A673 (cell line): ENCODE measurements at regions of chr13 and their contacts with region 1.

Region 1: DNA sequence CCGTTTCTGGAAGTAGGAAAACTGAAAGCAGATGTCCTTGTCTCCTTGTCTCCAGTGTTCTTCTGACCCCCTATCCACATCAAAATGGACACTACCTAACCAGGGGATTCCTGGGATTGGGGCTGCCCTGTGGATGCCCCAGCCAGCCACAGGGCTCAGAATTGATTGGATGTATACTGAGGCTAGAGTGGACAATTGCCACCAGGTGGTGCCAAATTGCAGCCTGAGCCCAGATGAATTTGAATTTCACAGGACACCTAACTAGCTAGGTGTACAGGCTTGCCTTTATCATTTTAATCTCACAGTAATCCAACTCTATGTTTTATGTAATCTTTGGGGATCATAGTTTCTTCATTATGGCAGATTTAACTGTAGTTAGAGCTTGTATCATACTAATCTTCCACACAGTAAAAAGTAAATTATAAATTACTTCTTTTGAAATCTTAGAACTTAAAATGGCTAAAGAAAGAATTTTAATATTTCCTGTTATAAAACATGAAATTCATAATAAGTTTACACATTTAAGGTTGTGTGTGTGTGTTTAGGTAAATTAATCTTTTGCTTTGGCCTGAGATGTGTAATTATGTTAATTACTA is 58.0 kb downstream of the PIBF1 start:
- DNase-seq: peak; percentile 43
- H3K4me3 ChIP-seq: no peak overlapping the region
- H3K27ac ChIP-seq: no peak overlapping the region
- H3K4me1 ChIP-seq: no peaks in the 10 kb centered on the region
- H3K27me3 ChIP-seq: no peaks in the 10 kb centered on the region
- CTCF ChIP-seq: peak; percentile 65

Region 2: GRCh38 chr13:72180253-72180952 is 659.5 kb before region 1 on chr13:
- CTCF ChIA-PET with region 1: no interaction called
- POLR2A ChIA-PET with region 1: no interaction called
- intact Hi-C with region 1: no loop called
- DNase-seq: no peak
- H3K4me3 ChIP-seq: no peak overlapping the region
- H3K27ac ChIP-seq: no peak overlapping the region
- H3K4me1 ChIP-seq: no peaks in the 10 kb centered on the region
- H3K27me3 ChIP-seq: peaks cover 32% of the 10 kb centered on the region
- CTCF ChIP-seq: no peak

Region 3: DNA sequence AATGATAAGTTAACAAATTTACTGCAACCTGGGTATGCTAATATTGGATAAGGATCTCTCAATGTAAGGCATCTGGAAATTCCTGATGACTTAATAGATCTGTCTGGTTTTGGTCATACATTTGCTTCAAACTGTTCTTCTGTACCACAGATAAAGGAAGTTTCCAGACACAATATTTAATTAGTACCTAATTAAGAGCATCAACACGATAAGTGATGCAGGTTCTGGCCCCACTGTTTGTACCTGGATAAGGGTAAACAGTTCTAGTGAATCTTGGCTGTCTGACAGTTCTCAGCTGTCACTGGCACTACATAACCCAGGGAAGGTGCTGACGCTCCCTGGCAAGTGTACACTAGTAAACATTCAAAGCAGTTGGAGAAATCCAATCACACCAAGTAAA is 278.1 kb before region 1 on chr13:
- CTCF ChIA-PET with region 1: no interaction called
- POLR2A ChIA-PET with region 1: no interaction called
- intact Hi-C with region 1: no loop called
- DNase-seq: no peak
- H3K4me3 ChIP-seq: no peak overlapping the region
- H3K27ac ChIP-seq: no peak overlapping the region
- H3K4me1 ChIP-seq: no peaks in the 10 kb centered on the region
- H3K27me3 ChIP-seq: peaks cover 6% of the 10 kb centered on the region
- CTCF ChIP-seq: no peak

Region 4: DNA sequence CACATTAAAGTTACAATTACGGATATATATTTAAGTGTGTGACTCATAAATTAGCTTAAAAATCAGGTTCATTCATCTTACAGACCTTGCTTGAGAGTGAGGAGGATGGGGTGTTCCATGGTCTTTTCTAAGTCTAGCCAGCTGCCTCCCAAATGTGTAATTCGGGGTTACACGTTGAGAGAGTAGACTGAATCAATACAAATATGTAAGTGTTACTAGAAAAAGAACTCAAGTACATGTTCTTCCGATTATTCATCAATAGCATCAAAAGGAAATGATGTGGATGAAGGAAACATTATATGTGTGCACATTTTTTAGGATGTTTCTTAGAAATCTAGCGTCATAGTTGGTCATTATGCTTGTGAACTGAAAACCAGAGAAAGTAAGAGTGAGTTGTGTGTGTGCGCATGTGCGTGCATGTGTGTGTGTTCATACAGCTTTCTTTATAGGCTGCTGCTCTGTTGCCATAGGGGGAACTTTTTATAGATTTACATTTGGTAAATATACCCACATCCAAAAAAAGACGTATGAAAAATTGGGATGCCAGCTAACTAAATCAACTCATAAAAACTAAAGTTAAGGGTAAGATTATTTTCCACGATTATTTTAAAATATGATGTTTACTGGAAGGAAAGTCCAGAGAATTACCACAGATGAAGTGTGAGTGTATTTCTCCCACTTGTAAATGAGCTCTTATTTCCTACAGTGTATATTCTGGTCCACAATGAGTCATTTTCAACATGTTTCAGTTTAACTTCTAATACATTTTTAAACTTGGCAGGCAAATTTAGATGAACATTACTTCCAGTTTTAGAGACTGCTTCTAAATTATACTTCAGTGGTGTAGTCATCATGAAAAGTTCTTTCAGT is 24.4 kb after region 1 on chr13:
- CTCF ChIA-PET with region 1: interaction called, 11 read pairs
- POLR2A ChIA-PET with region 1: no interaction called
- intact Hi-C with region 1: no loop called
- DNase-seq: no peak
- H3K4me3 ChIP-seq: no peak overlapping the region
- H3K27ac ChIP-seq: no peak overlapping the region
- H3K4me1 ChIP-seq: no peaks in the 10 kb centered on the region
- H3K27me3 ChIP-seq: no peaks in the 10 kb centered on the region
- CTCF ChIP-seq: no peak